A549 (cell line): ENCODE measurements at regions of chr12 and their contacts with region 1.

Region 1: GRCh38 chr12:26884765-26885576 is 52.0 kb upstream of the ITPR2 start:
- DNase-seq: peak; percentile 60 to 81
- ATAC-seq: peak; percentile 96 to 97
- H3K4me3 ChIP-seq: no peak overlapping the region
- H3K27ac ChIP-seq: no peak overlapping the region
- H3K4me1 ChIP-seq: no peaks in the 10 kb centered on the region
- CTCF ChIP-seq: peak; percentile 85
- EP300 ChIP-seq: no peak
- POLR2A ChIP-seq: no peak
- RAD21 ChIP-seq: peak; percentile 71 to 81

Region 2: DNA sequence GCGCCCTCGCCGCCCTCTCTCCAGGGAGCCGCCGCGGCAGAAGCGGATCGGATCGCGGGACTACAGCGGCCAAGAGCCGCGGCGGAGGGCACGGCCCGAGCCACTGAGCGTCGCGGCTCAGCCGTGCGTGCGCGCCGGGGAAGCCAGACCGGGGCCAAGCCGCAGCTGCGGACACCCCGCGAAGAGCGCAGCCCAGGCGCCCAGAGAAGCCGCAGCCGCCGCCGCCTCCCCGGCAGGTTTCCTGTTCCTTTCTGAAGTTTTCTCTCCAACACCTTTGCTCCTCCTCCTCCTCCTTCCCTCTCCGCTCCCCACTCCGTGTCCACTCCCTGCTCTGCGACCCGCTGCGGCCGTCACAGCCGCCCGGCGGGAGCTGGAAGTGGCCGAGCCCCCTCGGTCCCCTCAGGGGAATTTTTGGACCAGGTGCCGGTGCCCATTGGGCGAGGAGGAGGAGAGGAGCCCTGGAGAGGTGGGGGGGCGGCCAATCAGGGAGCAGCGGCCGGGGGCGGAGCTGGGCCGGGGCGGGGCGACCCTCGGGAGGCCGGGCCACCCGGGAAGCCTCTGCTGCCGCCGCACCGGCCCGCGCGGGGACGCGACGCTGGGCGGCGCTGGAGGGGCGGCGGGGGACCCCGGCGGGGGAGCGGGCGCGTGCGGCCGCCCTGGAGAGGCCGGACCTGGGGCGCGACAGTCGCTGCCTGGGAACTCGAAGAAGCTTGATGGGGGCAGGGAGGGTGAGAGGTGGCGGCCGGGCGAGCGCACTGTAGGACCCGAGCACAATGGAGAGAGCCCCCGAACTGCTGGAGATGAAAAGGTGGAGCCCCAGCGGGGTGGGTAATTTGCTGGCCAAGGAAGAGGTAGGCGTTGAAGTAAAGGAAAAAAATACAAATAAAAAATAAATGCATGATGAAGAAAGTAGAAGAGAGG is 51.9 kb before region 1 on chr12 and contains the start of gene ITPR2:
- CTCF ChIA-PET with region 1: interaction called, 19 read pairs
- POLR2A ChIA-PET with region 1: no interaction called
- DNase-seq: peak; percentile 88 to 94
- ATAC-seq: peak; percentile 88 to 92
- H3K4me3 ChIP-seq: peak within 1 kb of the TSS; percentile 61
- H3K27ac ChIP-seq: peak within 1 kb of the TSS; percentile 70 to 90
- H3K4me1 ChIP-seq: no peaks in the 10 kb centered on the region
- CTCF ChIP-seq: peak; percentile 60
- EP300 ChIP-seq: no peak
- POLR2A ChIP-seq: peak; percentile 88
- RAD21 ChIP-seq: peak; percentile 4 to 58; a peak in 2 of 5 replicates
- polyA plus RNA-seq, gene ITPR2: 6.0 and 8.1 TPM in 2 replicates

Region 3: GRCh38 chr12:26854031-26854390 is 31.0 kb before region 1 on chr12:
- CTCF ChIA-PET with region 1: interaction called, 10 read pairs
- POLR2A ChIA-PET with region 1: no interaction called
- DNase-seq: no peak
- ATAC-seq: peak; percentile 55; a peak in 4 of 6 replicates
- H3K4me3 ChIP-seq: no peak overlapping the region
- H3K27ac ChIP-seq: no peak overlapping the region
- H3K4me1 ChIP-seq: no peaks in the 10 kb centered on the region
- CTCF ChIP-seq: no peak; the same call in 2 of the 3 replicates
- EP300 ChIP-seq: no peak
- POLR2A ChIP-seq: no peak
- RAD21 ChIP-seq: no peak

Region 4: DNA sequence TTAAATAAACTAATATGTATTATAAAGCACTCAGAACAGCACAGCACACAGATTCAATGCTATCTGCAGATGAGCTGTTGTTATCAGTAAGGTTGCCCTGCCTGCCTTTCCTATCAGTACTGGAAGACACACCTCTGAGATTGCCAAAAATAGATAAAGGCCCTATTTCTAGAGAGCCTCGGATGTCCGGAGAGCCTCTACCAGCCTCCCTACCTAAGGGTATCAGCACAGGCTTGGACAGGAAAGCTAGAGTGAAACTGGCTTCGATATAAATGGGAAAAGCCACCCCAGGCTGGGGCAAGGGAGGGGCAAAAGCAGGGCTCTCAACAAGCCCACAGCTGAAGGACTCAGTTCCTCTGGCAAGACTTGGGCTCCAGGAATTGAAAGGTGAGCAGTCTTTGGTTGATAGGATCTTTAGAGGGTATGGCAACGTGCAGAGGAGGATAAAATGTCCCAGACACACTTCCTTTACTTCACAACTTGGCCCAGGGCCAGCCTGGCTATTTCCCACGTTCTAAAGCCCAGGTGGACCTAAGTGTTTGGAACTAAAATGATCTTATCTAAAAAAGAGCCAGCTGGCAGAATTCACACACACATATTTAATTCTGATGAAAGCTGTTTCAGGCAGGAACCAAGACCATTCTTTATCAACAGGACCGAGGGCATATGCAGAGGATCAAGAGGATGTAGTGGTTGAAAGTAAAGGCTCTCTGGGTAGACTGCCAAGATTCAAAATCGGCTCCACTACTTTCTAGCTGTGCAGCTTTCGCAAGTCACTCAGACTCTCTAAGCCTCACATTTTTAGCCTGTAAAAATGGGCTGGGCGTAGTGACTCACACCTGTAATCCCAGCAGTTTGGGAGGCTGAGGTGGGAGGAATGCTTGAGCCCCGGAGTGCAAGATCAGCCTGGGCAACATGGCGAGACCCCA is 14.2 kb before region 1 on chr12:
- CTCF ChIA-PET with region 1: interaction called, 46 read pairs
- POLR2A ChIA-PET with region 1: no interaction called
- DNase-seq: peak in 1 of 2 experiments; percentile 26
- ATAC-seq: peak; percentile 54 to 69; a peak in 5 of 6 replicates
- H3K4me3 ChIP-seq: no peak overlapping the region
- H3K27ac ChIP-seq: peak overlapping the region in 1 of 2 experiments; percentile 29; a peak in 1 of 6 replicates
- H3K4me1 ChIP-seq: peaks cover 12% of the 10 kb centered on the region; the same call in 2 of the 3 replicates
- CTCF ChIP-seq: no peak
- EP300 ChIP-seq: no peak
- POLR2A ChIP-seq: no peak
- RAD21 ChIP-seq: no peak

Region 5: GRCh38 chr12:26906704-26907103 is 21.7 kb after region 1 on chr12:
- CTCF ChIA-PET with region 1: interaction called, 37 read pairs
- POLR2A ChIA-PET with region 1: no interaction called
- DNase-seq: no peak
- ATAC-seq: no peak
- H3K4me3 ChIP-seq: no peak overlapping the region
- H3K27ac ChIP-seq: no peak overlapping the region
- H3K4me1 ChIP-seq: no peaks in the 10 kb centered on the region
- CTCF ChIP-seq: no peak
- EP300 ChIP-seq: no peak
- POLR2A ChIP-seq: no peak
- RAD21 ChIP-seq: no peak